HAP-1 (cell line): ENCODE measurements at regions of chr5 and their contacts with region 1.

Region 1: DNA sequence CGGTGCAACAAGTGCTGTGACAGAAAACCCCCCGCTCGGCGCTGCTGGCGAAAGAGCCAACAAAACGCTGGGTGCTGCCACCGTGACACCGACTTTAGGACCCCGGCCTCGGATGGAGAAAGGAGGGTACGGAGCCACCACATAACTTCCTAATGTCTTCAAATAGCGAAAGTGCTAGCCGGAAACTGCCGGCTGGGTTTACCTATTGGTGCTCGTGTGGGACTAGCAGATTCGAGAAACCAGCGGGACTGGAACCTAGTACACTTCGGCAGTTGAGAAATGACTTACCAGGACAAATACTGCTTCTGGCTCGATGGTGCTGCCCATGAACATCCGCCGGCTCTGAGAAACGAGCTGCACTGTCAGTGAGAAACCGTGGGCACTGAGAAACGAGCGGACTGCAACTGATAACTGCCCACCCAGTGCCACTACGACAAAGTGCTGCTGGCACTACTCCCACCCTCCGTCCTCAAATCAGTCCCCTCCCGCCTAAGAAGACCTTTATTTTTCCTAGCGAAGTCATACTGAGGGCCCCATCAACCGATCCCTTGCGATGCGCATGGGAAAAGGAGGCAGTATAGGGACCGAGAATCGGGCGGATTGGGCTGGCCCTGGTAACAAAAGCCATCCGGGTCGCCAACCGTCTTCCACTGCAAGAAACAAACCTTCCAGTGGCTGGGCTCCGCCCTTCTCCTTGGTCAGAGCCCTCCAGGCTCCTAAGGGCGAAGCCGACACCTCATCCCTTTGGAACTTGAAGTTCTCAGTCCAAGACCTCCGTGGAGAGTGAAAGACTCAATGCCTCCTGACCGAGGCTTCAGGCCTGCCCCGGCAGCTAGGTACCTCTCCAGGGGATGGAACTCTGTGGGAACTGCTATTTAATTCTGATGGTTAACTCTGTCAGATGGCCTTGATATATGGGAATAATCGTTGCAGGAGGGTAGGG is 27.0 kb upstream of the ANXA2R start:
- DNase-seq: peak; percentile 74 to 87
- H3K4me3 ChIP-seq: peak overlapping the region; percentile 59
- H3K4me1 ChIP-seq: peaks cover 14% of the 10 kb centered on the region
- H3K27me3 ChIP-seq: no peaks in the 10 kb centered on the region

Region 2: GRCh38 chr5:42701351-42702059 is 365.6 kb before region 1 on chr5:
- in situ Hi-C with region 1: no loop called
- DNase-seq: no peak
- H3K4me3 ChIP-seq: no peak overlapping the region
- H3K4me1 ChIP-seq: no peaks in the 10 kb centered on the region
- H3K27me3 ChIP-seq: no peaks in the 10 kb centered on the region

Region 3: DNA sequence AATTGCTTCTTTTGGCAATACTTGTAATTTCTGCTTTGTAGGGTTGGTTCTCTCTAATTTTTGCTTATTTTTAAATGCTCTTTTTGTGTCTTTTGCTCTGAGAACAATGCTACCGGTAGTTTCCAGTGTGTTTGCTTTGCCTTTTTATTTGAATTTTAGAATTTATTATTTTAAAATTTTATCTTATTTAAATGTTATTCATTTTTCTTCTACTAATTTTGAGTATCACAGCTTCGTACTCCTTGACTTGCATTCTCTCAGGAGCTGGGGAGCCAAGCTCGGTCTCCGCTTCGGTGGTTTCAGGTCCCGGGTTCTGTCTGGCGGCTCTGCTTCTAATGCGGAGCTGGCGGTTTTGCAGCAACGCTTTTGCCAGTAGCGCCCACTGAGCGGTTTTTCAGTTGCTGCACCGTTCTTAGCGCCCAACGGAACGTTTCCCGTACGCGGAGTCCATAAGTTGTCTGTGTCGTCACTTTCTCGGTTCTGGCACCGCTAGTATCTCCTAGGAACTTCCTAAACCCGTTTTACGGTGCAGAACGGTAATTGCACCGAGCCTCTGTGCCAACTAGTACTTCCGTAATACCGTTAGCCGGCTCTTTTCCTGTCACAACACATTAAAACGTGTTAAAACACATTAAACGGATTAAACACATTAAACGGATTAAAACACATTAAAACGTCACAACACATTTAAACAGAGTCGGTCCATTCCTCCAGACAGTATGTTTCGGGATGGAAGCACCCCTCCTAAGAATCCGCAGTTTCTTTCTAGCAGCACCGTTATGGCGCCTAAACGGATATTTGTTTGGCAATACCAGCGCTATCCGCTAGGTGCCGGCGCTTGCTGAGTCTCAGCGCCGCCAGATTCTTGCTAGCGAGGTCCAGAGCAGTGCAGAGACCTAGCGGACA is 72.6 kb before region 1 on chr5:
- in situ Hi-C with region 1: loop called (anchors 5 kb)
- DNase-seq: peak; percentile 93
- H3K4me3 ChIP-seq: peak overlapping the region; percentile 50
- H3K4me1 ChIP-seq: peaks cover 15% of the 10 kb centered on the region
- H3K27me3 ChIP-seq: no peaks in the 10 kb centered on the region